ENCODE measurements at regions of chr11 and their contacts with region 1.

Region 1: GRCh38 chr11:94973099-94973968 is at the starts of genes CWC15 and KDM4D:
- DNase-seq: peak; percentile 97
- H3K4me3 ChIP-seq: peak within 1 kb of the TSS; percentile 84 to 93 (median 86)
- H3K27ac ChIP-seq: peak within 1 kb of the TSS; percentile 81 to 88 (median 82)
- H3K4me1 ChIP-seq: peaks cover 0 to 14% (median 12%) of the 10 kb centered on the region in 4 donors
- H3K27me3 ChIP-seq: no peaks in the 10 kb centered on the region
- CTCF ChIP-seq: no peak
- EP300 ChIP-seq: no peak
- POLR2A ChIP-seq: peak in 1 of 2 donors; percentile 26
- total RNA-seq, gene CWC15: 39.8 to 69.9 (median 47.3) TPM
- total RNA-seq, gene KDM4D: 0.33 to 0.55 (median 0.36) TPM in 3 of 4 donors, not detected in the other

Region 2: DNA sequence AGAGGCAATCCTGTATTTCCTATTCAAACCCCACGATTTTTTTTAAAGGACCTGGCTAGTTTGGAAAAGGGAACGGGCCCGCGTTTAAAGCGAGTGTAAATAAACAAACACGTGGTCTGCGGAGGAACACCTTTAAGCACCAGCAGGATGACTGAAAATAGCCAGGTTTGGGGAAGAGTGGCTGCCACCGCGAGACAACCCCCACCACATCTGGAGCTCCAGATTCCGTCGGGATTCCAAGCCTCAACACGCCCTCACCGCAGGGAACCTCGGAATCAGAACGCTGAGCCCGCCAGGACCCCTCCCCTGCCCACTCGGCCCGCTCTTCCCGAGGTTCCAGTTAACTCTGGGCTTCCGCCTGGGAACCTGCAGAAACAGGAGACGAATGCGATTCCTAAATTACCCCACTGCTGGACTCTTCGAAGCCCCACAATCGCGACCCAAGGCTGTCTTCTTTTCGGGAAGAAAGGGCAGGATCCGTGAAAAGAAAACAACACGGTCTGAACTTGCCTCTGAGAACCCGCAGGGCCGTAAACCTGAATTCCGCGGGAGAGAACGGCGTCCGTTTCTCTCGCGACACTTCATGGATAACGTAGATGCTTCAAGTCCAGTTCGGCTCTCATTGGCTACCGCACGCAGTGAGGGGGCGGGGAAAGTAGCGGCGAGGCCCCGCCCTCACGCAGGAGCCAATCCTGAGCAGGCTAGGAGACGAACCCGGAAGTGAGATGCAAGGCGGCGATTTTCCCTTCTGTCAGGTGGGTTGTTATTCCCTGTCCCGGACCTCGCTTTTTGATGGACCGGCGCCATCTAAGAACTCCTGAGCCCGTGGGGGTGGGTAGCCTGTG is 479.8 kb before region 1 on chr11 and contains the starts of genes ANKRD49 and MRE11:
- intact Hi-C with region 1: loop called (anchors 2 kb)
- DNase-seq: peak; percentile 99
- H3K4me3 ChIP-seq: peak within 1 kb of the TSS; percentile 72 to 92 (median 82)
- H3K27ac ChIP-seq: peak within 1 kb of the TSS; percentile 82 to 88 (median 86)
- H3K4me1 ChIP-seq: peaks cover 0 to 30% (median 28%) of the 10 kb centered on the region in 4 donors
- H3K27me3 ChIP-seq: no peaks in the 10 kb centered on the region
- CTCF ChIP-seq: no peak
- EP300 ChIP-seq: no peak
- POLR2A ChIP-seq: peak; percentile 68 to 72
- total RNA-seq, gene ANKRD49: 19.3 to 27.7 (median 23.4) TPM
- total RNA-seq, gene MRE11: 12.5 to 26.6 (median 16.3) TPM

Region 3: DNA sequence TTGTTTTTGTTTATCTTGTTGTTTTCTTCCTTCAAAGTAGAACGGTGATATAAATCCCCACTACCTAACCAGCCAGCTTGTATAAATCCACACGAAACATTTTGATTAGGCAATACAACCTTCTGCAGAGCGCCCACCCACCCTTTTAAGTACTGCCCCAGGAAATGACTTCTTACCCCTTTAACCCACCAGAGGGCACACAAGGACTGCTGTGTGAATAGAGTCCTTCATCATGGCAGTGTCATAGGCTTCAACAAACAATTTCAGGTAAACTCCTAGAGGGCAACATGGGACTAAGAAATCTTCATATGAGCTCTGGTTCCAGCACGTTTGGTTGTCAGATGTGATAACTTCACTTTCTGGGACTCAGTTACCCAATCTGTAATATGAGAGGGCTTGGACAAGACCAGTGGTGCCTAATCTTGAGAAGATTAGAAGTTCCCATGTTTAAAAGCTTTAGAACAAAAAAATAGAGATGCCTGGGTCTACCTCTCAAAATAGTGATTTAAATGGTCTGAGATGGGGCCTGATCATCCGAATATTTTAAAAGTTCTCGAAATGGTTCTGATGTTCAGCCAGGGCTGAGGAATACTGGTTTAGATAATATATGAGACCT is 350.1 kb before region 1 on chr11:
- intact Hi-C with region 1: loop called (anchors 5 kb)
- DNase-seq: no peak
- H3K4me3 ChIP-seq: no peak overlapping the region
- H3K27ac ChIP-seq: no peak overlapping the region
- H3K4me1 ChIP-seq: peaks cover 0 to 5% (median 0%) of the 10 kb centered on the region in 4 donors
- H3K27me3 ChIP-seq: no peaks in the 10 kb centered on the region
- CTCF ChIP-seq: peak; percentile 74 to 90 (median 76)
- EP300 ChIP-seq: no peak
- POLR2A ChIP-seq: no peak

Region 4: DNA sequence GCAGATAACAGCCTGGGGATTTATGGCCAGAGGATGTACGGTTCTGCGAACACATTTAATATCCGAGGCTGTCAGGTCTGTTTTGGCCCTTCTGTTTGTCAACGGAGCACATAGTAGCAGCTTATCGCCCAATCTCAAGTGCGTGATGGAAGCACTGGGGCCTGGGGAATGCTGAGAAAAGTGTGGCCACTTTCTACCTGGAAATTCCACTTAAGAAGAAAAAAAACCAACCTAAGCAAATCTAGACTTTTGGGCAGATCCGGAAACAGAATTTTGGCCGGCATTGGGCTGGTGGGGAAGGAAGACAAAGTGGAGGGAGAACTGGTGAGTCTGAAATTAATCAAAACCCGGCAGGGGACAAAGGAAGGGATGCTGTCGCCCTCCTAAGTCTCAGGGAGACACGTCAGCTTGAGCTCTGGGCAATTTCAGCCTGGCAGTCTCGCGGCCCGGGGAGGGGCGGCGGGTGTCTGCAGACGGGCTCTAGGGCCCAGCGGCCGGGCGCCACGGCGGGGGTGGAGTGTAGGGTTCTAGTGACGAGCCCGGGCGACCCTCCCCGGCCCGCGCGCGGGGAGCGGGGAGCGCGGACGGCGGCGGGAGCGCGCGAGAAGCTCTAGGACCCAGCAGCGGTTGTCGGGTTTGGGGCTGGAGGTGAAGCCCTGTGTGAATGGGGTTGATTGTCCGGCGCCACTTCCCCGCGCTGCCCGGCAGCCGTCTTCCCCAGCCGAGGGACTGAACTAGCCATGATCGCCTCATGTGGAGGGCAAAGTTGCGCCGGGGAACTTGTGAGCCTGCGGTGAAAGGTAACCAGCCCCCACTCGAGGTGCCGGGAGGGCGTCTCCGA is 205.4 kb before region 1 on chr11 and contains the start of gene AMOTL1:
- intact Hi-C with region 1: loop called (anchors 10 kb)
- DNase-seq: peak; percentile 96
- H3K4me3 ChIP-seq: peak within 1 kb of the TSS; percentile 84 to 95 (median 91)
- H3K27ac ChIP-seq: peak within 1 kb of the TSS; percentile 97 to 99 (median 98)
- H3K4me1 ChIP-seq: peaks cover 0 to 77% (median 59%) of the 10 kb centered on the region in 4 donors
- H3K27me3 ChIP-seq: no peaks in the 10 kb centered on the region
- CTCF ChIP-seq: no peak
- EP300 ChIP-seq: peak in 2 of 4 donors; percentile 7 to 61
- POLR2A ChIP-seq: peak in 1 of 2 donors; percentile 74
- total RNA-seq, gene AMOTL1: 96.3 to 161 (median 115) TPM

Region 5: GRCh38 chr11:94876645-94877442 is 96.5 kb before region 1 on chr11:
- intact Hi-C with region 1: loop called (anchors 5 kb)
- DNase-seq: peak; percentile 95
- H3K4me3 ChIP-seq: no peak overlapping the region
- H3K27ac ChIP-seq: peak overlapping the region; percentile 56 to 87 (median 72)
- H3K4me1 ChIP-seq: peaks cover 0 to 64% (median 49%) of the 10 kb centered on the region in 4 donors
- H3K27me3 ChIP-seq: no peaks in the 10 kb centered on the region
- CTCF ChIP-seq: peak in 2 of 4 experiments; percentile 12 to 23
- EP300 ChIP-seq: no peak
- POLR2A ChIP-seq: no peak

Region 6: DNA sequence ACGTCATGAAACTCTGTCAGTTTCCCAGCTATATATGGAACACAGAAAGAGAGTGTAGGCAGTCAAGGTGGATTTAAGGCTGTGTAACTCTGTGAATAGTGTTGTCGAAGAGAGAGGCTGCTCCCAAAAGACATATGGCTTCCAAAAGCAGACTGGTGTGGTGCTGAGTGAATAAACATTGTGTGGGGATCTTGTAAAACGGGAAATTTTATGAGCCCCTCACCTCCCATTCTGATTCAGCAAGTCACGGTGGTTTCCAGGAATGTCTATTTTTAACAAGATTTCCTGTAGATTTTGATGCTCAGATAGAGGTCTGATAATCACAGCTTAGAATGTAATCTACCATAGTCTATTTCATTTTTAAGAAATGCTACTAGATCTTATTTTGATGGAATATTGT is 189.8 kb after region 1 on chr11:
- intact Hi-C with region 1: no loop called
- DNase-seq: no peak
- H3K4me3 ChIP-seq: no peak overlapping the region
- H3K27ac ChIP-seq: no peak overlapping the region
- H3K4me1 ChIP-seq: peaks cover 0 to under 1% (median 0%) of the 10 kb centered on the region in 4 donors
- H3K27me3 ChIP-seq: no peaks in the 10 kb centered on the region
- CTCF ChIP-seq: no peak
- EP300 ChIP-seq: no peak
- POLR2A ChIP-seq: no peak

Region 7: GRCh38 chr11:95764267-95764898 is 791.0 kb after region 1 on chr11:
- intact Hi-C with region 1: loop called (anchors 5 kb)
- DNase-seq: no peak
- H3K4me3 ChIP-seq: no peak overlapping the region
- H3K27ac ChIP-seq: no peak overlapping the region
- H3K4me1 ChIP-seq: no peaks in the 10 kb centered on the region
- H3K27me3 ChIP-seq: no peaks in the 10 kb centered on the region
- CTCF ChIP-seq: peak; percentile 59 to 69 (median 60)
- EP300 ChIP-seq: no peak
- POLR2A ChIP-seq: no peak

Measured in sigmoid colon (tissue), 7 donors.